ENCODE measurements at regions of chr1 and their contacts with region 1.

Region 1: GRCh38 chr1:211698161-211699026 is 23.0 kb upstream of the NEK2 start:
- DNase-seq: peak; percentile 74
- ATAC-seq: peak; percentile 92
- H3K4me3 ChIP-seq: peak overlapping the region; percentile 57 to 70 (median 58)
- H3K27ac ChIP-seq: no peak overlapping the region
- H3K4me1 ChIP-seq: peaks cover 25% of the 10 kb centered on the region
- H3K27me3 ChIP-seq: peaks cover 3 to 14% of the 10 kb centered on the region in 2 experiments; a peak in 3 of 5 replicates
- CTCF ChIP-seq: peak; percentile 99
- EP300 ChIP-seq: 0 out of 4 replicates have a peak, but pooled peaks of 1 of the 2 experiments have one; percentile 33
- POLR2A ChIP-seq: no peak
- RAD21 ChIP-seq: peak; percentile 98

Region 2: GRCh38 chr1:211643324-211644212 is 54.8 kb before region 1 on chr1:
- CTCF ChIA-PET with region 1: no interaction called
- POLR2A ChIA-PET with region 1: no interaction called
- in situ Hi-C with region 1: no loop called
- intact Hi-C with region 1: no loop called
- DNase-seq: peak; percentile 96
- ATAC-seq: peak; percentile 75
- H3K4me3 ChIP-seq: peak overlapping the region; percentile 5 to 64 (median 53); a peak in 5 of 6 replicates
- H3K27ac ChIP-seq: peak overlapping the region; percentile 26
- H3K4me1 ChIP-seq: peaks cover 85% of the 10 kb centered on the region
- H3K27me3 ChIP-seq: no peaks in the 10 kb centered on the region
- CTCF ChIP-seq: 0 out of 2 replicates have a peak, but pooled peaks have one; percentile 18
- EP300 ChIP-seq: peak in 1 of 2 experiments; percentile 93; a peak in 2 of 4 replicates
- POLR2A ChIP-seq: no peak
- RAD21 ChIP-seq: 0 out of 2 replicates have a peak, but pooled peaks have one; percentile 12

Region 3: DNA sequence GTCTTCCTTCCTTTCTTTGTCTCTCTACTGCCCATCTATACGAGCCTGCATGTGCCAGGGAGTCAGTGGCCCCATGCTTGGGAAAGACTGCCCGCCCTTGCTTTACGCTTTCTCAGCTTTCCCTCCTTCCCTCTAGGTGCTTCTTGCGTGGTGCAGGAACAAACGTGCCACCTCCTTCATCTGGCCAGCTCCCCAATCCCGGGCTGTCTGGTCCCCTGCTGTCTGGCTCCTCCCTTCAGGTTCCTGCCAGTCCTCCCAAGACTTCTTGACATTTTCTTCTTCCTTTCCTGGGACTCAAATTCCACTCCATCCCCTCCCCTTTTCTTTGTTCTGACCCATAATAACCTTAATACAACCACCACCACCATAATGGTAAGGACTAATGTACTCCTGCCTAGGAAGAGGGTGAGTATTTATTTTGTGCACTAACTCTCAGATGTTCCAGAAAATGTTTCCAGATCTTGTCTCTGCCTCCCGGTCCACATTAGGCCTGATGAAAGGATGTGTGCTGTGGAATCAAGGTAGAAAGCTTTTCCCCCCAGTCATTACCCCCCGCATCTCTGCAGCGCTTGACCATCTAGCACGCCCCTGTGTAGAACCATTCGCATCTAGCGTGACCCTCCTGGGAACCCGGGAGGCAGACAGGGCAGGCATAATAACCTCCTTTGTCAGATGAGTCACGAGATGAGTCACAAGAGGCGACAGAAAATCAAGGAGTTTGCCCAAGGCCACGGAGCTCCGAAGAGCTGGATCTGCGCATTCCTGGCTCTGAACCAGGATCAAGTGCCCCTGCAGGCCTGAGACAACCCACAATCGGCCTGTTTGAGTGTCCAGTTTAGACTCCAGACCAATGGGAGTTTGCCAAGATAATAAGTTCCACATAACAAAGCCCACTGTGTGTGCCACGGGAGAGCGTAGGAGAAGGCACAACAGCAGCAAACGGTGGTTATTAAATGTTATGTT is 37.1 kb after region 1 on chr1:
- CTCF ChIA-PET with region 1: no interaction called
- POLR2A ChIA-PET with region 1: no interaction called
- in situ Hi-C with region 1: no loop called
- intact Hi-C with region 1: loop called (anchors 5 kb)
- DNase-seq: peak; percentile 17
- ATAC-seq: peak; percentile 10; the same call in 1 of the 3 replicates
- H3K4me3 ChIP-seq: no peak overlapping the region
- H3K27ac ChIP-seq: no peak overlapping the region
- H3K4me1 ChIP-seq: peaks cover 45% of the 10 kb centered on the region
- H3K27me3 ChIP-seq: peaks cover 0 to 46% of the 10 kb centered on the region in 2 experiments; a peak in 4 of 5 replicates
- CTCF ChIP-seq: no peak
- EP300 ChIP-seq: no peak
- POLR2A ChIP-seq: no peak
- RAD21 ChIP-seq: no peak

Region 4: GRCh38 chr1:211788626-211789025 is 90.2 kb after region 1 on chr1:
- CTCF ChIA-PET with region 1: no interaction called
- POLR2A ChIA-PET with region 1: no interaction called
- in situ Hi-C with region 1: no loop called
- intact Hi-C with region 1: loop called (anchors 1 kb)
- DNase-seq: no peak
- ATAC-seq: no peak
- H3K4me3 ChIP-seq: no peak overlapping the region
- H3K27ac ChIP-seq: peak overlapping the region; percentile 67
- H3K4me1 ChIP-seq: peaks cover 60% of the 10 kb centered on the region
- H3K27me3 ChIP-seq: no peaks in the 10 kb centered on the region
- CTCF ChIP-seq: no peak
- EP300 ChIP-seq: no peak
- POLR2A ChIP-seq: no peak
- RAD21 ChIP-seq: no peak

Region 5: DNA sequence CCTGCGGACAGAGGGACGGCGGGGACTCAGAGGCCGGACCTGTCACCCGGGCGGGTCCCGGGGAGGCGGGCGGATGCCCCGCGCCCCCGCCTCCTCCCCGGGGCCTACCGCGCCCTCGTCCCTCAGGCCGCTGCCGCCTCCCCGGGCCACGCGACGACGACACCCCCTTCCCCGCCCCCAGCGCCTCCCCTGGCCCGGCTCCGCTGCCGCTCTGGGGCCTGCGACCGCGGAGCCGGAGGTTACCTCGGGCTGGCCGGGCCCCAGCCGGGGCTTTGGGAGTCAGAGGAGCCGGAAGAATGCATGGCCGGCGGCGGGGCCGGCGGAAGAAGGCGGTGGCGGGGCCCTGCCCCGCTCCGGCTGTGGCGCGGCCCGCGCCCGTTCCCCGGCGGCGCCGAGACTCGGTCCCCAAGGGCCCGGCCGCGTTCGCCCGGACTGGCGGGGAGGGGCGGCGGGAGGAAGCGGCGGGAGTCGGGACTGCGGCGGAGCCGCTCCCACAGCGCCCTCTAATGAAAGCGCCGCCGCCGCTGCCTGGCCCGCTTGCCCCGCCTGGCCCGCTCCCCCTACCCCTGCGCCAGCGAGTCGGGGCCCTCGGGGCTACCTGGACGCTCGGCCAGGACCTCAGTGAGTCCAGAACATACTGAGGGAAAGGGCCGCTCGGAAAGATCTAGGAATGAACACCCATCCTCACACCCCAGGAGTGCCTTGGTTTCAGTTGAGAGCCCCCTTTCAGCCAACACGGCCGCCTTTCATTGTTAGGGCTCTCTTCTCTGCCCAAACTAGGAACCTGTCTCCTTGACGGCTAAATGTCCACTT is 132.1 kb after region 1 on chr1 and contains the start of gene LPGAT1:
- CTCF ChIA-PET with region 1: interaction called, 3 read pairs
- POLR2A ChIA-PET with region 1: no interaction called
- in situ Hi-C with region 1: loop called (anchors 5 kb)
- intact Hi-C with region 1: loop called (anchors 1 kb)
- DNase-seq: peak; percentile 24
- ATAC-seq: peak; percentile 94
- H3K4me3 ChIP-seq: peak within 1 kb of the TSS; percentile 81 to 95 (median 82)
- H3K27ac ChIP-seq: peak within 1 kb of the TSS; percentile 74
- H3K4me1 ChIP-seq: peaks cover 27% of the 10 kb centered on the region
- H3K27me3 ChIP-seq: no peaks in the 10 kb centered on the region
- CTCF ChIP-seq: peak; percentile 84
- EP300 ChIP-seq: peak in 1 of 2 experiments; percentile 12; a peak in 1 of 4 replicates
- POLR2A ChIP-seq: peak; percentile 12 to 43; a peak in 2 of 4 replicates
- RAD21 ChIP-seq: peak; percentile 93
- total RNA-seq, gene LPGAT1: 48.3 and 51.0 TPM in 2 replicates

Region 6: DNA sequence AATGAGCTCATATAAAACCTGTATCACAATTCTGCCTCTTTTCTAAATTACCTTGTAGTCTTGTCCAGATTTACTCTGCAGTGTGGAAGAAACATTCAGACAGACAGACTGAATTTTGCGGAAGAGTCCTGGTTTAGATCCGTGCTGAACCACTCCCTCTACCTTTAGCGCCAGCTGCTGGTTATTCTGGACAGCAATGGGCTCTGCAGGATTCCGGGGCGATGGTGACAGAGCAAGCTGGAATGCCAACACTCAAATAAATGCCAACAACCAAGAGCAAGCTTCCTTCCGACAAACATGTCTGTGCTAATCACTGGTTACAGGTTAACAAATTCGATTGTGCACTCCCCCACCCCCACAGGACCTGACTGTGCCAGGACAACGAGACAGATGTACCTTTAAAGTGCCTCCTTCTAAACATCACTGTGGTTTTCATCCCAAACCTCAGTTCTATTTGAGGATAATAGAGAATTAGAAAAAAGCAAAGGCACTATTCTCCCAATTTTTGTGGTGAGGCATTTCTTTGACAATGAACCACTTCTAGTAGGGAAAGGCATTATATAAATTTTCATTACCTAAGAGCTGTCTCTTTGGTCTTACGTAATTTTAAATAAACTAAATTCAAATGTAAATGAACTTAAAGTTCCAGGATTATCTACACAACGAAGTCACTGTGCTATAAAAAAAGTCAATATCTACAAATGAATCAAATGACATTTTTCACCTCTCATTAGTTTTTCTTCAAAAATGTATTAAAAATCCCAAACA is 246.5 kb after region 1 on chr1:
- CTCF ChIA-PET with region 1: interaction called, 5 read pairs
- POLR2A ChIA-PET with region 1: no interaction called
- in situ Hi-C with region 1: no loop called
- intact Hi-C with region 1: loop called (anchors 1 kb)
- DNase-seq: peak; percentile 94
- ATAC-seq: peak; percentile 99
- H3K4me3 ChIP-seq: no peak overlapping the region
- H3K27ac ChIP-seq: no peak overlapping the region
- H3K4me1 ChIP-seq: peaks cover 31% of the 10 kb centered on the region
- H3K27me3 ChIP-seq: no peaks in the 10 kb centered on the region
- CTCF ChIP-seq: peak; percentile 96
- EP300 ChIP-seq: peak in 1 of 2 experiments; percentile 58; a peak in 1 of 4 replicates
- POLR2A ChIP-seq: no peak
- RAD21 ChIP-seq: peak; percentile 92

Region 7: DNA sequence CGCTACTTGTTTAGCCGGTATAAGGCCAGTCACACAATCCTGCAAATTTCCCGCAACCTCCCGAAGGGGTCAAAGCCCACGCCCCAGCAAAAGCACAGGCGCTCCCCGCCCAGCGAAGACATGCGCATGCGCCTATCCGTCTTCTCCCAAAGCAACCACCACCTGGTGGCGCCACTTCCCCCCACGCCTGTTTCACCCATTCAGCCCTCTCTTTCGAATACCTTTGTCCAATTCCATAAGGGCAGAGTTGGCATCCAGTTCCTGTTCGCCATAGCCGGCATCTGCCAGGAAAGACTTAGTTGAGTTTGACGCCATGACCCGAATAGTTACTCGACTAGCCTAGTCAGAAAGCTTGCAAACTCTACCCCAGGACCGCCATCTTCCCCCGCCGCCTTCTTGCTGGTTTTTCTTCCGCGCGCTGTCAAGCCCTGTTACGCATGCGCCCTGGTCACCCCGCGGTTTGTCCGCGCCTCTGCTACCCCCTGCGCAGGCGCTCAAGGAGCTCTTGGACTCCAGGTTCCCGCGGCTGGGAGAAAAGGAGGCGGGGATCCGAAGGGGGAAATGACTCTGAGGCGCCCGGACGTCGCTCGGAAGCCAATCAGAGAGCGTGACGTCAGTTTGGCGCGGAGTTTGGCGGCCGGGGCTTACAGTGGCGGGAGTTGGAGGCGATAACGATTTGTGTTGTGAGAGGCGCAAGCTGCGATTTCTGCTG is 336.9 kb after region 1 on chr1 and contains the starts of genes DTL and INTS7:
- CTCF ChIA-PET with region 1: interaction called, 7 read pairs
- POLR2A ChIA-PET with region 1: interaction called, 22 read pairs
- in situ Hi-C with region 1: loop called (anchors 5 kb)
- intact Hi-C with region 1: loop called (anchors 2 kb)
- DNase-seq: peak; percentile 99
- ATAC-seq: peak; percentile 94
- H3K4me3 ChIP-seq: peak within 1 kb of the TSS; percentile 83 to 92 (median 89)
- H3K27ac ChIP-seq: peak within 1 kb of the TSS; percentile 93
- H3K4me1 ChIP-seq: peaks cover 62% of the 10 kb centered on the region
- H3K27me3 ChIP-seq: no peaks in the 10 kb centered on the region; a peak in 1 of 5 replicates
- CTCF ChIP-seq: peak; percentile 98
- EP300 ChIP-seq: no peak; a peak in 1 of 4 replicates
- POLR2A ChIP-seq: peak; percentile 93 to 94
- RAD21 ChIP-seq: peak; percentile 82
- total RNA-seq, gene DTL: 32.8 and 43.1 TPM in 2 replicates
- total RNA-seq, gene INTS7: 22.4 and 32.7 TPM in 2 replicates

Measured in HepG2 (cell line).